WTC11 (cell line): ENCODE measurements at regions of chr6 and their contacts with region 1.

Region 1: GRCh38 chr6:160221423-160221822 is 37.2 kb downstream of the SLC22A2 start:
- DNase-seq: no peak
- ATAC-seq: peak; percentile 60
- H3K4me3 Mint-ChIP-seq: no peak overlapping the region
- H3K27ac Mint-ChIP-seq: peak overlapping the region; percentile 18; the same call in 1 of the 2 replicates
- H3K4me1 Mint-ChIP-seq: peaks cover 47% of the 10 kb centered on the region
- H3K27me3 Mint-ChIP-seq: no peaks in the 10 kb centered on the region; the same call in 1 of the 2 replicates
- CTCF ChIP-seq: no peak

Region 2: DNA sequence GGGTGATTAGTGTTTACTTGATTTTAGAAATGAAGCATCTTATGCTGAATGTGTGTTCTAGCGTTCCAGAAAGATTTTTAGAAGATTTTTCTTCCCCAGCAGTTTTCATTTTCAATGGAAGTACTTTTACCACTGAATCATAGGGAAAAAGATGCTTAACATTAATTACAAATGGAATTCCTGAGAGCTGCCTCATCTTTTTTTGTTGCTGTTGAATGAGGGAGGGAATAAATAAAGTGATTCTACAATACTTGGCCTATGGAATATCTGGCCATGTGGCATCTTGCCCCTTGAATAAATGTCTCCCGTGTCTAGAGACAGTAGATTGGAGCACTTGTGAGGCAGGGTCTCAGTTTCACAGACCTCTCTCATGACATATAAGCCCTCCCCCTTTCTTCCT is 143.9 kb before region 1 on chr6:
- CTCF ChIA-PET with region 1: no interaction called
- POLR2A ChIA-PET with region 1: no interaction called
- DNase-seq: no peak
- ATAC-seq: no peak
- H3K4me3 Mint-ChIP-seq: no peak overlapping the region
- H3K27ac Mint-ChIP-seq: no peak overlapping the region
- H3K4me1 Mint-ChIP-seq: no peaks in the 10 kb centered on the region
- H3K27me3 Mint-ChIP-seq: no peaks in the 10 kb centered on the region
- CTCF ChIP-seq: no peak

Region 3: GRCh38 chr6:160297310-160297709 is 75.9 kb after region 1 on chr6:
- CTCF ChIA-PET with region 1: interaction called, 49 read pairs
- POLR2A ChIA-PET with region 1: no interaction called
- DNase-seq: peak; percentile 54
- ATAC-seq: peak; percentile 85
- H3K4me3 Mint-ChIP-seq: no peak overlapping the region
- H3K27ac Mint-ChIP-seq: no peak overlapping the region
- H3K4me1 Mint-ChIP-seq: peaks cover 31% of the 10 kb centered on the region
- H3K27me3 Mint-ChIP-seq: no peaks in the 10 kb centered on the region; the same call in 1 of the 2 replicates
- CTCF ChIP-seq: no peak

Region 4: DNA sequence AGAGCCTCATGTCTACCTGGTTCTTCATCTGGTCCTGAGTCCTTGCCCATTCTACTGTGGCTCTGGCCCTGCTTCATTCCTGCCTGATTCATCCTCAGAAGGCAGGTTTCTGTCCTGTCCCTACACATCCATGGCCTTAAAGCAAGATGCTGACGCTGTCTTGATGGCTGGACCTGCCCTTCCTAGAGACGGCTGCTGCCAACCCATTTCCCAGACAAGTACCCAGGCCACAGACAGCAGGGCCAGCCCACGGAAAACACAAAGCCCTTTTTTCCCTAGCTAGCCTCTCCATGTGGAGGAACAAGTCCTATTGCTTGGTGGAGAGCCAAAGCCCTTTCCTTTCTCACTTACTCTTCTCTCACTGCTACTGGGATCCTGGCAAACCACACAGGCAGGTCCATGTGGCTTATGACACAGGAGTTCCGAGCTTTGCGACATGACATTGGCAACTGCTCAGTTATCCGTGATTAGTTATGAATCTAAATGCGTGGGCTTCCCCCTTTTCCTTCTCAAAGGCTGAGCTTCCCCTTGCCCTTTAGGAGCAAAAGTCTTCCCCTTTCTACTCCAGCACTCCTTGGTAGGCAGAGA is 199.6 kb after region 1 on chr6:
- CTCF ChIA-PET with region 1: no interaction called
- POLR2A ChIA-PET with region 1: no interaction called
- DNase-seq: no peak
- ATAC-seq: no peak
- H3K4me3 Mint-ChIP-seq: no peak overlapping the region
- H3K27ac Mint-ChIP-seq: no peak overlapping the region
- H3K4me1 Mint-ChIP-seq: peaks cover 6% of the 10 kb centered on the region; the same call in 1 of the 2 replicates
- H3K27me3 Mint-ChIP-seq: no peaks in the 10 kb centered on the region
- CTCF ChIP-seq: no peak